GM12878 (cell line): ENCODE measurements at regions of chr7 and their contacts with region 1.

Region 1: GRCh38 chr7:12524794-12525386 is 45.6 kb upstream of the SCIN start:
- DNase-seq: peak; percentile 2
- ATAC-seq: peak; percentile 58
- H3K4me3 ChIP-seq: no peak overlapping the region
- H3K27ac ChIP-seq: no peak overlapping the region
- H3K4me1 ChIP-seq: no peaks in the 10 kb centered on the region
- H3K27me3 ChIP-seq: no peaks in the 10 kb centered on the region
- CTCF ChIP-seq: peak; percentile 29 to 60 (median 46); a peak in 5 of 6 replicates
- EP300 ChIP-seq: no peak
- POLR2A ChIP-seq: no peak
- RAD21 ChIP-seq: peak; percentile 80

Region 2: DNA sequence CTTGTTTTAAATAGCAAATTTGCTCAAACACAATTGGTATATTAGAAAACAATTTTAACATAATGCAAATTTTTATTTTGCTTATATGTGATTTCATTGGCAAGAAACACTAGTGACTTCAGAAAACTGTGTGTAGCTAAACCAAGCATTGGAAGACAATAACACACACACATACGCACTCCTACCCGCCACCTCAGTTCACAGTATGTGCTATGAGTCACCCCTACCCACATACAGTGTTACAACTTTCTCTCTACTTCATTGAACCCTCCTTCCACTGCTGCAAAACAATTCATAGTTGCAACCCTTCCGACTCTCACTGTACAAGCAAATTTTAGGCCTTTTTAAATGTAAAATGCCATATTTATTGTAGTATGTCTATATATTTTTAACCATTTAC is 573.0 kb before region 1 on chr7:
- CTCF ChIA-PET with region 1: no interaction called
- POLR2A ChIA-PET with region 1: no interaction called
- RAD21 ChIA-PET with region 1: no interaction called
- SMC1A ChIA-PET with region 1: no interaction called
- in situ Hi-C with region 1: no loop called
- intact Hi-C with region 1: no loop called
- DNase-seq: no peak
- ATAC-seq: peak; percentile 71
- H3K4me3 ChIP-seq: no peak overlapping the region
- H3K27ac ChIP-seq: no peak overlapping the region
- H3K4me1 ChIP-seq: no peaks in the 10 kb centered on the region
- H3K27me3 ChIP-seq: no peaks in the 10 kb centered on the region
- CTCF ChIP-seq: no peak
- EP300 ChIP-seq: no peak
- POLR2A ChIP-seq: no peak
- RAD21 ChIP-seq: no peak

Region 3: DNA sequence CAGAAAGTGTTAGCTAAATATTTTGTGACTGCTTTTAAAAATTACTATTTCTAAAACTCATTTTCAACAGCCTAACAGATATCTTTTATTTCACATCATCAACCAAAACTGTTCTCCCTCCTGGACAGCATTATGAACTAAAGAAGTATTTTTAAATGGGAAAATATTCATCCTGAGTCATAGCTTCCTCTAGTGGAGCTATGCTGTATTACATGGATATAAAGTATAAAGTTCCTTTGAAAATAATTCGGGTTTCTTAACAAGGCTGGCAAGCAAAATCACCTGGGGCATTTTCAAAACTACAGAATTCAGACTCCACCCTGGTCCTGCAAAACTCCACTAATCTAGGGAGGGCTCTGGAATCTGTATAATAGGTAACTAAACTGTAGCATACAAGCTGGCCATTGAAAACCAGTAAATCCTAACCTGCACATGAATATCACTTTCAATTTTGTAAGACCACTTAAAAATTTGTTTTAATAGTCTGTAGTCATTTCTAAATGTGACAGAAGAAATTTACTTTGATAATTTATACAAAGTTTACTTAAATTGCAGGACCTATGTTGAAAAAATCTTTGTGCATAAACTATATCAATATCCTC is 99.1 kb after region 1 on chr7:
- CTCF ChIA-PET with region 1: interaction called, 78 read pairs
- POLR2A ChIA-PET with region 1: no interaction called
- RAD21 ChIA-PET with region 1: interaction called, 40 read pairs
- SMC1A ChIA-PET with region 1: interaction called, 40 read pairs
- in situ Hi-C with region 1: loop called (anchors 5 kb)
- intact Hi-C with region 1: loop called (anchors 1 kb)
- DNase-seq: no peak
- ATAC-seq: 0 out of 3 replicates have a peak, but pooled peaks have one; percentile 25
- H3K4me3 ChIP-seq: no peak overlapping the region
- H3K27ac ChIP-seq: no peak overlapping the region
- H3K4me1 ChIP-seq: no peaks in the 10 kb centered on the region
- H3K27me3 ChIP-seq: no peaks in the 10 kb centered on the region
- CTCF ChIP-seq: peak; percentile 53 to 65 (median 60); a peak in 4 of 6 replicates
- EP300 ChIP-seq: no peak
- POLR2A ChIP-seq: no peak
- RAD21 ChIP-seq: peak; percentile 89

Region 4: DNA sequence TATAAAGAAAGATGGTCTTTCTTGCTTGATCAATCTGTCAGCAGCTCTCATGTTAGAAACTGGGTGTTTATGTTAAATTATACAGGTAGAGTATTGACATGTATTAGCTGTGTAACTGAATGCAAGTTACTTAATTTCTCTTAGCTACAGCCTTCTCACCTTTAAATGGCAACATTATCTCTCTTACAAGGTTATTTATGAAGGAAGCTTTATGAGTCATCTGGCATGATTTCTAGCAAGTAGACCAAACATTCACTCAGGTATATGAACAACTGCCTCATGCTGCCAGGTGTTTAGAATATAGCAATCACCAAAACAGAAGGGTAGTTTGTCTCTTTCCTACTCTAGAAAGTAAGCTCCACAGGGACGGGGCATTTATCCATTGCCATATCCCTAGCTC is 171.1 kb after region 1 on chr7:
- CTCF ChIA-PET with region 1: no interaction called
- POLR2A ChIA-PET with region 1: no interaction called
- RAD21 ChIA-PET with region 1: no interaction called
- SMC1A ChIA-PET with region 1: no interaction called
- in situ Hi-C with region 1: no loop called
- intact Hi-C with region 1: no loop called
- DNase-seq: no peak
- ATAC-seq: no peak
- H3K4me3 ChIP-seq: no peak overlapping the region
- H3K27ac ChIP-seq: no peak overlapping the region
- H3K4me1 ChIP-seq: no peaks in the 10 kb centered on the region
- H3K27me3 ChIP-seq: no peaks in the 10 kb centered on the region
- CTCF ChIP-seq: no peak
- EP300 ChIP-seq: no peak
- POLR2A ChIP-seq: no peak
- RAD21 ChIP-seq: no peak

Region 5: GRCh38 chr7:13257661-13258060 is 732.8 kb after region 1 on chr7:
- CTCF ChIA-PET with region 1: interaction called, 5 read pairs
- POLR2A ChIA-PET with region 1: interaction called, 5 read pairs
- RAD21 ChIA-PET with region 1: interaction called, 10 read pairs
- SMC1A ChIA-PET with region 1: interaction called, 6 read pairs
- in situ Hi-C with region 1: loop called (anchors 10 kb)
- intact Hi-C with region 1: loop called (anchors 2 kb)
- DNase-seq: no peak
- ATAC-seq: no peak
- H3K4me3 ChIP-seq: no peak overlapping the region
- H3K27ac ChIP-seq: no peak overlapping the region
- H3K4me1 ChIP-seq: no peaks in the 10 kb centered on the region
- H3K27me3 ChIP-seq: no peaks in the 10 kb centered on the region
- CTCF ChIP-seq: no peak
- EP300 ChIP-seq: no peak
- POLR2A ChIP-seq: no peak
- RAD21 ChIP-seq: no peak

Region 6: GRCh38 chr7:13262929-13263530 is 738.1 kb after region 1 on chr7:
- CTCF ChIA-PET with region 1: interaction called, 5 read pairs
- POLR2A ChIA-PET with region 1: no interaction called
- RAD21 ChIA-PET with region 1: interaction called, 10 read pairs
- SMC1A ChIA-PET with region 1: interaction called, 6 read pairs
- in situ Hi-C with region 1: loop called (anchors 10 kb)
- intact Hi-C with region 1: loop called (anchors 2 kb)
- DNase-seq: no peak
- ATAC-seq: no peak
- H3K4me3 ChIP-seq: no peak overlapping the region
- H3K27ac ChIP-seq: no peak overlapping the region
- H3K4me1 ChIP-seq: no peaks in the 10 kb centered on the region
- H3K27me3 ChIP-seq: no peaks in the 10 kb centered on the region
- CTCF ChIP-seq: peak in 2 of 3 experiments; percentile 13 to 54; a peak in 3 of 6 replicates
- EP300 ChIP-seq: no peak
- POLR2A ChIP-seq: no peak
- RAD21 ChIP-seq: peak; percentile 71